ENCODE measurements at regions of chr4 and their contacts with region 1.

Region 1: GRCh38 chr4:6873792-6874461 is 35.7 kb upstream of the TBC1D14 start:
- DNase-seq: peak; percentile 45 to 73
- ATAC-seq: peak; percentile 32 to 37
- H3K4me3 ChIP-seq: no peak overlapping the region
- H3K27ac ChIP-seq: peak overlapping the region; percentile 80 to 90 (median 84)
- H3K4me1 ChIP-seq: peaks cover 42 to 58% of the 10 kb centered on the region in 2 donors
- H3K27me3 ChIP-seq: no peaks in the 10 kb centered on the region
- CTCF ChIP-seq: peak; percentile 70 to 88 (median 84)
- POLR2A ChIP-seq: no peak

Region 2: DNA sequence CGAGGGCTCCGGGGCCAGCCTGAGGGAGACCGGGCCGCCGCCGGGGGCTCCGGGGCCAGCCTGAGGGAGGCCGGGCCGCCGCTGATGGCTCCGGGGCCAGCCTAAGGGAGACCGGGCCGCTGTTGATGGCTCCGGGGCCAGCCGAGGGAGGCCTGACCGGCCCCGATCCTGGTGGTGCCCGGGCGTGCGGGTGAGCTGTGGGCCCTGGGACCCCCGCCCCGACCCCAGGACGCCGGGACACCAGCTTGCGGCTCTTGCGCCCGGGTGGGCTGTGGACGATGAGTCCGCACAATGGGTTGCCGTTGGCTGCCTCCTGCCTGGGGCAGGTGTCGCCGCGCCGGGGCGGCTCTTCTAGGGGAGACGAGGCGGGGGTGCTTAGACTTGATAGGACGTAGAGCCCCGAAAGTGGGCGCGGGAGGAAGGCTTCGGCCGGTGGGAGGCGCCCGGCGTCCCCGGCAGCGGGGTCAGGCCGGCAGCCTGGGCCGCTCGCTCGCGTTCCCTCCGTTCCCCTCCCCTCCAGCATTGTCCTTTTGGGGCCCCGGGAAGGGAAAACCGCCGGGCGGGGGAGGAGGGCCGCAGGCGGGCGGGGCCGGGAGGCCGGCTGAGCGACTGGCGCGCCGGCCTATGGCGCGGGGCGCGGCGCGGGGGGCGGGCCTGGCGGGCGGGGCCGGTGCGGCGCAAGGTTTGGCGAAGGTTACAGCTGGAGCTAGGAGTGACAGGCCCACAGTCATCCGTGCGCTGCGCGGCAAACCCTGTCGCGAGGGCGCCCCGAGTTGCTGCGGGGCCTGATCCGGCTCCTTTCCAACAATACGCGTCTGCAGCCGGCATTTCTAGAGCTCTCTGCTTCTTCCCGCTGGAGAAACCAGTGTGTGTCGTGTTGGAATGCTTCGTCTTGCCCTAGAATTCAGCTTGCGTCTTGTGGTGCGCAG is 90.6 kb before region 1 on chr4:
- in situ Hi-C with region 1: no loop called
- intact Hi-C with region 1: loop called (anchors 2 kb)
- DNase-seq: peak; percentile 88 to 93
- ATAC-seq: peak; percentile 67 to 72
- H3K4me3 ChIP-seq: peak overlapping the region; percentile 74 to 98 (median 82)
- H3K27ac ChIP-seq: peak overlapping the region; percentile 95 to 100 (median 98)
- H3K4me1 ChIP-seq: peaks cover 58 to 59% of the 10 kb centered on the region in 2 donors
- H3K27me3 ChIP-seq: no peaks in the 10 kb centered on the region
- CTCF ChIP-seq: peak in 4 of 5 experiments; percentile 4 to 42 (median 19)
- POLR2A ChIP-seq: peak; percentile 94 to 95

Region 3: DNA sequence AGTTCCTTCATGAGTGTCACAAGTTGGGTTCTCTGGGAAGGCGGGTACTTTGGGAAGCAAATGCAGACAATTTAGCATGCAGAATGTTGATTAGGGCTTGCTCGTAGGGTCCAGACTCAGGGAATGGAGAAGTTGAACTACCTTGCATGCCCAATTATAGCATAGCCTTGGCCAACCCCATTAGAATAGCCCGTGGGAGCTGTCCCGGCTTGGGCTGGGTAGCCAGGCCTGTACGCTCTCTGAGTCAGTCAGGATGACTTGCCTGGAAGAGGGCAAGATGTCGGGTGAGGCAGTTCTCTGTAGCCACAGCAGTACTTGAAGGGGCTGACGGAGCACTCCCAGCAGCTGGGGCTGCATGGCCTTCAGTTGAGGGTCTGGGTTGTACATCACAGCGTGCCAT is 71.9 kb before region 1 on chr4:
- in situ Hi-C with region 1: no loop called
- intact Hi-C with region 1: no loop called
- DNase-seq: no peak
- ATAC-seq: peak; percentile 30 to 40
- H3K4me3 ChIP-seq: no peak overlapping the region
- H3K27ac ChIP-seq: peak overlapping the region in 2 of 4 donors; percentile 12 to 35
- H3K4me1 ChIP-seq: peaks cover 71 to 72% of the 10 kb centered on the region in 2 donors
- H3K27me3 ChIP-seq: no peaks in the 10 kb centered on the region
- CTCF ChIP-seq: no peak
- POLR2A ChIP-seq: no peak

Region 4: GRCh38 chr4:6812766-6813165 is 61.2 kb before region 1 on chr4:
- in situ Hi-C with region 1: no loop called
- intact Hi-C with region 1: no loop called
- DNase-seq: no peak
- ATAC-seq: no peak
- H3K4me3 ChIP-seq: no peak overlapping the region
- H3K27ac ChIP-seq: peak overlapping the region in 3 of 4 donors; percentile 44 to 69 (median 46)
- H3K4me1 ChIP-seq: peaks cover 41 to 42% of the 10 kb centered on the region in 2 donors
- H3K27me3 ChIP-seq: no peaks in the 10 kb centered on the region
- CTCF ChIP-seq: no peak
- POLR2A ChIP-seq: no peak

Measured in gastrocnemius medialis (tissue), 4 donors.